CD4-positive, alpha-beta T cell (primary cell): ENCODE measurements at regions of chr12 and their contacts with region 1.

Region 1: GRCh38 chr12:38886064-38886463 is 19.3 kb downstream of the CPNE8 start:
- DNase-seq: peak in 1 of 14 experiments; percentile 13
- ATAC-seq: no peak
- H3K4me3 ChIP-seq: no peak overlapping the region
- H3K4me3 Mint-ChIP-seq: no peak overlapping the region
- H3K27ac ChIP-seq: no peak overlapping the region
- H3K27ac Mint-ChIP-seq: no peak overlapping the region
- H3K4me1 ChIP-seq: no peaks in the 10 kb centered on the region
- H3K4me1 Mint-ChIP-seq: no peaks in the 10 kb centered on the region
- H3K27me3 ChIP-seq: no peaks in the 10 kb centered on the region
- H3K27me3 Mint-ChIP-seq: no peaks in the 10 kb centered on the region
- CTCF ChIP-seq: no peak

Region 2: DNA sequence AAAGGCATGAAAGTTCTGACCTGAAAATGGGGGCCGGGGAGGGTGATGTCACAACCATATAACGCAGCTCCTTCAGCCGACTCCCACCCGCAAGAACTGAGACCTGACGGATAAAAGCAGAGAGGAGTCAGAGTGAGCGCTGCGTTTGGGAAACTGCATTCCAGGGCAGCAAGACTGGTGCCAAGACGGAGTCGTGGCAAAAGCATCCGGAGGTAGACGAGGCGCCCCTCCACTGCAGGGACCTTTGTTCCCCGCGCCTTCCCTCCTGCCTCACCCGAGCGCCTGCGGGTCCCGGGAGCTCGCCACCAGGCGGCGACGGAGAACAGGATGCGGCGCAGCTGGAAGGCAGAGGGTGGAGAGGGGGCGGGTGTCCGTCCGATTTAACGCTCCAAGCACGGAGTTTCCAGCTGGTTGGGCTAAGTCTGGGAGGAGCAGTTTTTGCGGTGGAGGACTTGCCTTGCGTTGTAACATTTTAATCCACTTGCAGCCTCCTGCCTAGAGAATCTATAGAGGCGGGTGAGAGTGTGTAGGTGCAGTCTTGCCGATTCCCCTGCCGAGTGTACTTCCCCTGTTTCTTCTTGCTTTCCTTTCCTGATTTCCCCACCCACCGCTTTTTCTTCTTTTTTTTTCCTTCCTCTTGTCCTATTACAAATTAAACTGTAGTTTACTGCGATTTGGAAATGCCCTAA is 20.6 kb after region 1 on chr12:
- CTCF ChIA-PET with region 1: no interaction called
- POLR2A ChIA-PET with region 1: no interaction called
- intact Hi-C with region 1: no loop called
- DNase-seq: peak; percentile 22 to 80 (median 49)
- ATAC-seq: peak; percentile 75
- H3K4me3 ChIP-seq: peak overlapping the region; percentile 88
- H3K4me3 Mint-ChIP-seq: peak overlapping the region; percentile 92
- H3K27ac ChIP-seq: no peak overlapping the region
- H3K27ac Mint-ChIP-seq: peak overlapping the region; percentile 42
- H3K4me1 ChIP-seq: peaks cover 8% of the 10 kb centered on the region
- H3K4me1 Mint-ChIP-seq: peaks cover 35% of the 10 kb centered on the region
- H3K27me3 ChIP-seq: peaks cover 0 to 8% of the 10 kb centered on the region in 2 experiments
- H3K27me3 Mint-ChIP-seq: peaks cover 23% of the 10 kb centered on the region
- CTCF ChIP-seq: peak; percentile 66

Region 3: DNA sequence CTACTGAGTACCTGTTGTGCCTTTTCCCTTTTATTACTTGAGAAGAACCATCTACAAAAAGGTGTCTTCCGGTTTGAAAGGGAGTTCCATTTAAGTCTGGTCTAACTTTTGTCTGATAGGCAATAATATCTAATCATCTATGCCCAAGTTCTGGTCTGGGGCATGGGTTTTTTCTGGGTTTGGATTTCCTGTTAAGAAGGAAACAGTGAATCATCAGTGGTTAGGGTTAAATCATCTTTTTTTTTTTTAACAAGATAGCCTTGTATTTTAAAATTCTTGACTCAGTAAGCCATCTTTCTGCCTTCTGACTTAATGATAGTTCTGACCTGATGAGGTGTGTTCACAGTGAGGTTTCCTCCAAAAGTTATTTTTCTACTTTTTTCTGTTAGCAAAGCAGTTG is 48.6 kb after region 1 on chr12:
- CTCF ChIA-PET with region 1: no interaction called
- POLR2A ChIA-PET with region 1: no interaction called
- intact Hi-C with region 1: loop called in 1 of 2 experiments (anchors 5 kb)
- DNase-seq: no peak
- ATAC-seq: no peak
- H3K4me3 ChIP-seq: no peak overlapping the region
- H3K4me3 Mint-ChIP-seq: no peak overlapping the region
- H3K27ac ChIP-seq: no peak overlapping the region
- H3K27ac Mint-ChIP-seq: no peak overlapping the region
- H3K4me1 ChIP-seq: no peaks in the 10 kb centered on the region
- H3K4me1 Mint-ChIP-seq: no peaks in the 10 kb centered on the region
- H3K27me3 ChIP-seq: no peaks in the 10 kb centered on the region
- H3K27me3 Mint-ChIP-seq: no peaks in the 10 kb centered on the region
- CTCF ChIP-seq: no peak

Region 4: GRCh38 chr12:38956337-38956736 is 70.3 kb after region 1 on chr12:
- CTCF ChIA-PET with region 1: no interaction called
- POLR2A ChIA-PET with region 1: no interaction called
- intact Hi-C with region 1: no loop called
- DNase-seq: no peak
- ATAC-seq: no peak
- H3K4me3 ChIP-seq: no peak overlapping the region
- H3K4me3 Mint-ChIP-seq: no peak overlapping the region
- H3K27ac ChIP-seq: no peak overlapping the region
- H3K27ac Mint-ChIP-seq: no peak overlapping the region
- H3K4me1 ChIP-seq: no peaks in the 10 kb centered on the region
- H3K4me1 Mint-ChIP-seq: no peaks in the 10 kb centered on the region
- H3K27me3 ChIP-seq: no peaks in the 10 kb centered on the region
- H3K27me3 Mint-ChIP-seq: no peaks in the 10 kb centered on the region
- CTCF ChIP-seq: no peak

Region 5: DNA sequence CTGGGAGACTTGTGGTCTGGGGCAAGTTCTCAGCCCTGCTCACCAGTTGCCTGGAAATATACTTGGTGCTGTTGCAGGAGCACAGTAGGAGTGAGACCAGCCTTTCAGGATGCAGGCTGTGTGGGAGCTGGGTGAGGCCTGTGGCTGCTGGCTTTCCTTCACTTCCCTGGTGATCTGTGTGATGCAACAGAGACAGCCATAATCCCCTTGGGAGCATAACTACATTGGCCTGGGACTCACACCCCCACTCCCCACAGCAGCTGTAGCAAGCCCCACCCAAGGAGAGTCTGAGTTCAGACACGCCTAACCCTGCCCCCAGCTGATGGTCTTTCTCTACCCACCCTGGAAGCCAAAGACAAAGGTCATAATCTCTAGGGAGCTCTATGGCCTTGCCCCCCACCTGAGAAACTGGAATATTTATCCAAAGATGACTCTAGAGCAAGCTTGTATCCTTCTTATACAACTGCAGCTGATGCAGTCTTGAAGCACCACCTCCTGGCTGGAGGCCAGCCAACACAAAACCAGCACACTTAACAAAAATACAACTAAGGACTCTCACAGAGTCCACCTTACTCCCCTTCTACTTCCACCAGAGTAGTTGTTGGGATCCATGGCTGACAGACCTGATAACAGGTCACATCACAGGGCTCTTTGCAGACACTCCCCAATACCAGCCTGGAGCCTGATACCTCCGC is 209.7 kb after region 1 on chr12:
- CTCF ChIA-PET with region 1: no interaction called
- POLR2A ChIA-PET with region 1: no interaction called
- intact Hi-C with region 1: no loop called
- DNase-seq: no peak
- ATAC-seq: no peak
- H3K4me3 ChIP-seq: no peak overlapping the region
- H3K4me3 Mint-ChIP-seq: no peak overlapping the region
- H3K27ac ChIP-seq: no peak overlapping the region
- H3K27ac Mint-ChIP-seq: no peak overlapping the region
- H3K4me1 ChIP-seq: no peaks in the 10 kb centered on the region
- H3K4me1 Mint-ChIP-seq: no peaks in the 10 kb centered on the region
- H3K27me3 ChIP-seq: no peaks in the 10 kb centered on the region
- H3K27me3 Mint-ChIP-seq: peaks cover 9% of the 10 kb centered on the region
- CTCF ChIP-seq: no peak

Region 6: DNA sequence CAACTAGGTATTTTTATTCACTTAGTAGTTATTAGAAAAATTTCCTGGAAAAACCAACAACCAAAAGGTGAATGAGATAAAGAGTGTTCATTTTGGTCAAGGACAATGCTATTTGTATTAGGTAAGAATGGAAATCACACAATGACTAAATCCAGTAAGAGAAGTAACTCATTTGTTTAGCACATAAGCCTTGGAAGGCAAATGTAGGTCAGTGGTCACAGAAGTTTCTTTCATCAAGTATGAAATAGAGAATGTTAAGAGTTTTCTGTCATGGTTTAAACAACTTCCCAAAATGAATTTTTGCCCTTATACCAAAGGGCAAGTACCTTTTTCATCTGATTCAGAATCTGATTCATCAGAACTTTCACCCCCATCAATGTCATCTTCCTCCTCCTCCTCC is 455.1 kb after region 1 on chr12:
- CTCF ChIA-PET with region 1: no interaction called
- POLR2A ChIA-PET with region 1: no interaction called
- intact Hi-C with region 1: no loop called
- DNase-seq: no peak
- ATAC-seq: no peak
- H3K4me3 ChIP-seq: no peak overlapping the region
- H3K4me3 Mint-ChIP-seq: no peak overlapping the region
- H3K27ac ChIP-seq: no peak overlapping the region
- H3K27ac Mint-ChIP-seq: no peak overlapping the region
- H3K4me1 ChIP-seq: no peaks in the 10 kb centered on the region
- H3K4me1 Mint-ChIP-seq: no peaks in the 10 kb centered on the region
- H3K27me3 ChIP-seq: no peaks in the 10 kb centered on the region
- H3K27me3 Mint-ChIP-seq: no peaks in the 10 kb centered on the region
- CTCF ChIP-seq: no peak